Tibial artery (tissue), 4 donors: ENCODE measurements at regions of chr14 and their contacts with region 1.

Region 1: GRCh38 chr14:72291908-72292688 is 359.9 kb downstream of the RGS6 start:
- DNase-seq: no peak
- H3K4me3 ChIP-seq: peak overlapping the region in 1 of 2 donors; percentile 14
- H3K27ac ChIP-seq: no peak overlapping the region
- H3K4me1 ChIP-seq: no peaks in the 10 kb centered on the region
- H3K27me3 ChIP-seq: no peaks in the 10 kb centered on the region
- CTCF ChIP-seq: peak; percentile 80 to 83

Region 2: DNA sequence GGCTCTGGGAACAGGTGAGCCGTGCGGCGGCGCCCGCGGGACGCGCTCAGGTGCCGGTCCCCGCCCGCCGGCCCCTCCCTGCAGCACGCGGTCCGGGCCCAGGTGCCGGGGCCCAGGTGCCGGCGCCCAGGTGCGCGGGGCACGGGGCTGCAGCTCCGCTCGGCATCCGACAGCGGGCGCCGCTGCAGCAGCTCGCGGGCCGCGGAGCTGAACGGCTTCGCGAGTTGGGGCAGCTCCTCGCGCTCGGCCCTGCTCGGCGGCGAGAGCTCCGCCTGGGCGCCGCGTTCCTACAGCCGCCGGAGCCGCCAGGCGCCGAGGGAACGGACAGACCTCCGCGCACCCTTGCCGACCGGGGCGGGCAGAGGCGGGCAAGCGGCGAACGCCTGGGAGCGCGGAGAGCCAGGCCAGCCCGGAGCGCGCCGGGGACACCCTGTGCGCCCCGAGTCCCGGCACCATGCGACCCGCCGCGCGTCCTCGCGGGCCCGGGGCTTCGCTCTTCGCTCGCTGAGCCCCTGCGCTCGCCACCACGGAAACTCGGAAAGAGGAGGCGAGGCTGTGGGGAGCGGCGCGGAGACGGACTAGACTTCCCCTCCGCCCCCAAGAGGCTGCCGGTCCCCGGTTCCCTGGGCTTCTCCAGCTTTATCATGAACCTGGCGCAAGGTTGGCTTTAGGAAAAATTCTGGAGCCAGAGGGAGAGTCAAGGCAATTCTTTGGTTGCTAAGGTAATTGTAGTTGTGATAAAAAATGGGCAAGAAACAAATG is 359.7 kb before region 1 on chr14 and contains the start of gene RGS6:
- intact Hi-C with region 1: loop called (anchors 5 kb)
- DNase-seq: no peak
- H3K4me3 ChIP-seq: peak within 1 kb of the TSS; percentile 59 to 86
- H3K27ac ChIP-seq: peak within 1 kb of the TSS; percentile 59 to 78
- H3K4me1 ChIP-seq: peaks cover 0 to 30% (median 12%) of the 10 kb centered on the region in 4 donors
- H3K27me3 ChIP-seq: peaks cover 0 to 6% of the 10 kb centered on the region in 2 donors
- CTCF ChIP-seq: peak; percentile 31 to 39

Region 3: GRCh38 chr14:72513965-72514659 is 222.0 kb after region 1 on chr14:
- intact Hi-C with region 1: no loop called
- DNase-seq: no peak
- H3K4me3 ChIP-seq: no peak overlapping the region
- H3K27ac ChIP-seq: peak overlapping the region in 1 of 2 donors; percentile 11
- H3K4me1 ChIP-seq: peaks cover 0 to 7% (median 5%) of the 10 kb centered on the region in 4 donors
- H3K27me3 ChIP-seq: no peaks in the 10 kb centered on the region
- CTCF ChIP-seq: peak; percentile 58 to 60